ENCODE measurements at regions of chr5 and their contacts with region 1.

Region 1: GRCh38 chr5:14727428-14727865 is 62.9 kb downstream of the OTULIN start:
- DNase-seq: peak; percentile 84
- ATAC-seq: peak; percentile 44
- H3K4me3 ChIP-seq: peak overlapping the region in 1 of 3 experiments; percentile 53; a peak in 1 of 6 replicates
- H3K27ac ChIP-seq: peak overlapping the region; percentile 96
- H3K4me1 ChIP-seq: peaks cover 28% of the 10 kb centered on the region
- H3K27me3 ChIP-seq: no peaks in the 10 kb centered on the region
- CTCF ChIP-seq: peak; percentile 92
- EP300 ChIP-seq: peak in 1 of 2 experiments; percentile 38; a peak in 1 of 4 replicates
- POLR2A ChIP-seq: no peak
- RAD21 ChIP-seq: peak; percentile 97

Region 2: GRCh38 chr5:14685757-14686156 is 41.7 kb before region 1 on chr5:
- CTCF ChIA-PET with region 1: no interaction called
- POLR2A ChIA-PET with region 1: no interaction called
- in situ Hi-C with region 1: no loop called
- intact Hi-C with region 1: loop called (anchors 5 kb)
- DNase-seq: peak; percentile 48
- ATAC-seq: peak; percentile 63; the same call in 2 of the 3 replicates
- H3K4me3 ChIP-seq: no peak overlapping the region
- H3K27ac ChIP-seq: no peak overlapping the region
- H3K4me1 ChIP-seq: no peaks in the 10 kb centered on the region
- H3K27me3 ChIP-seq: no peaks in the 10 kb centered on the region
- CTCF ChIP-seq: peak; percentile 62
- EP300 ChIP-seq: no peak
- POLR2A ChIP-seq: no peak
- RAD21 ChIP-seq: 0 out of 2 replicates have a peak, but pooled peaks have one; percentile 28

Region 3: GRCh38 chr5:14775857-14776256 is 48.4 kb after region 1 on chr5:
- CTCF ChIA-PET with region 1: interaction called, 3 read pairs
- POLR2A ChIA-PET with region 1: interaction called, 5 read pairs
- in situ Hi-C with region 1: loop called (anchors 5 kb)
- intact Hi-C with region 1: loop called (anchors 1 kb)
- DNase-seq: no peak
- ATAC-seq: no peak
- H3K4me3 ChIP-seq: no peak overlapping the region
- H3K27ac ChIP-seq: peak overlapping the region; percentile 24
- H3K4me1 ChIP-seq: peaks cover 73% of the 10 kb centered on the region
- H3K27me3 ChIP-seq: no peaks in the 10 kb centered on the region
- CTCF ChIP-seq: no peak
- EP300 ChIP-seq: no peak
- POLR2A ChIP-seq: no peak
- RAD21 ChIP-seq: no peak

Region 4: DNA sequence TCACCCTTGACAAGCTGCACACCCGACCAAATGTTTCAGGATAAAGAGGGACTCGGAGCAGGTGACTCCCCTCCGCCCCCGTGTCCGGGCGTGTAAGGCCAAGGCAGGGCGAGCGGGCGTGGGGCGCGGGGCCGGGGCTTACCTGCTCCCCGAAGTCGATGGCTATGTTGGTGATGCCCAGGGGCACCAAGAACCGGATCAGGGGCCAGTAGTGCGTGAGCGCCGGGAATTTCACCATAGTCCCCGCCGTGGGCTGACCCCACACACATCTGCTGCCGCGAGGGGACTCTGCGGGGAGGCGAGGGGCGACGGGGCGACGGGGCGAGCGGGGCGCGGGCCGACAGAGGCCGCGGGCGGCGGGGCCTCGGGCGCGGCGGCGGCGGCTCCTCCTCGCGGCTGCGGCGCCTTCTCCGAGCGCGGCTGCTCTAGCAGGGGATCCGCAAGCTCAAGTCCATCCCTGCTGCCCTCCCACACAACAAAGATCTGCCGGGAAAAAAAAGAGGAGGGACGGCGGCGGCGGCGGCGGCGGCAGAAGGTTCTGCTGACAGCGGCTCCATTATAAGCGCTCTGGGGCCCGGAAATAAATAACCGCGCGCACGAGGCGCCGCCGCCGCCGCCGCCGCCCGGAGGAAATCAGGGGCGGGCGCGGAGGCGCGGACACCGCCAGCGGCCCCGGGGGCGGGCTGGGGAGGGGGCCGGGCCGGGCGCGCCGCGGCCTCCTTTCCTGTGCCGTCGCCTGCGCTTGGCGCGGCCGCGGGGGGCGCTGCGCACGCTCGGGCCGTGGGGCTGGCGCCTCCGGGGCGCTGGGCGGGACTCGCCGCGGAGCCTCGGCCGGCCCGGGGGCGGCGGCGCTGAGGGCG is 144.0 kb after region 1 on chr5 and contains the start of gene ANKH:
- CTCF ChIA-PET with region 1: interaction called, 13 read pairs
- POLR2A ChIA-PET with region 1: interaction called, 5 read pairs
- in situ Hi-C with region 1: loop called (anchors 5 kb)
- intact Hi-C with region 1: loop called (anchors 1 kb)
- DNase-seq: peak; percentile 51
- ATAC-seq: peak; percentile 88
- H3K4me3 ChIP-seq: peak within 1 kb of the TSS; percentile 80 to 93 (median 88)
- H3K27ac ChIP-seq: peak within 1 kb of the TSS; percentile 54
- H3K4me1 ChIP-seq: peaks cover 46% of the 10 kb centered on the region
- H3K27me3 ChIP-seq: no peaks in the 10 kb centered on the region; a peak in 2 of 5 replicates
- CTCF ChIP-seq: no peak; the same call in 1 of the 2 replicates
- EP300 ChIP-seq: no peak
- POLR2A ChIP-seq: no peak
- RAD21 ChIP-seq: no peak
- total RNA-seq, gene ANKH: 20.5 and 25.0 TPM in 2 replicates

Region 5: DNA sequence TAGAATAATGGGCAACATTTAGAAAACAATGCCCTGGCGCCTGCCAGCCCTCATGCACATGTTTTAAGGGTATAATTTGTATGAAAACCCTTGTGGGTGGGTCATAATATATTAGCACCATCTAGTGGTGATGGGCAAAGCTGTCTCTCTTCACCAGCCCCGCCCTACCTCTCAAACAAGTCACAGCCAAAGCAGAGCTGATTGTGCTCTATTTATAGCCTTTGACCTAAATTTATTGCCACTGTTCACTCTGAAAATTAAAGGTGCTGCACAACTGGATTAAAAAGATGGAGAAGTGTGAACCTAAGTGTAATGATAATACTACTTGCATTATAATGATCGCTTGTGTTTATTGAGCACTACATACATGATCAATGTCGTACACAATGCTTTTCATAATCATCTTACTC is 276.1 kb after region 1 on chr5:
- CTCF ChIA-PET with region 1: interaction called, 30 read pairs
- POLR2A ChIA-PET with region 1: no interaction called
- in situ Hi-C with region 1: no loop called
- intact Hi-C with region 1: loop called (anchors 1 kb)
- DNase-seq: peak; percentile 59
- ATAC-seq: peak; percentile 87
- H3K4me3 ChIP-seq: no peak overlapping the region
- H3K27ac ChIP-seq: no peak overlapping the region
- H3K4me1 ChIP-seq: peaks cover 40% of the 10 kb centered on the region
- H3K27me3 ChIP-seq: peaks cover 0 to 4% of the 10 kb centered on the region in 2 experiments; a peak in 1 of 5 replicates
- CTCF ChIP-seq: peak; percentile 83
- EP300 ChIP-seq: no peak
- POLR2A ChIP-seq: no peak
- RAD21 ChIP-seq: peak; percentile 65; the same call in 1 of the 2 replicates

Region 6: GRCh38 chr5:15065091-15065490 is 337.6 kb after region 1 on chr5:
- CTCF ChIA-PET with region 1: no interaction called
- POLR2A ChIA-PET with region 1: no interaction called
- in situ Hi-C with region 1: no loop called
- intact Hi-C with region 1: no loop called
- DNase-seq: no peak
- ATAC-seq: no peak
- H3K4me3 ChIP-seq: no peak overlapping the region
- H3K27ac ChIP-seq: no peak overlapping the region
- H3K4me1 ChIP-seq: no peaks in the 10 kb centered on the region
- H3K27me3 ChIP-seq: no peaks in the 10 kb centered on the region
- CTCF ChIP-seq: no peak
- EP300 ChIP-seq: no peak
- POLR2A ChIP-seq: no peak
- RAD21 ChIP-seq: no peak